Psoas muscle (tissue), 8 donors: ENCODE measurements at regions of chr12 and their contacts with region 1.

Region 1: DNA sequence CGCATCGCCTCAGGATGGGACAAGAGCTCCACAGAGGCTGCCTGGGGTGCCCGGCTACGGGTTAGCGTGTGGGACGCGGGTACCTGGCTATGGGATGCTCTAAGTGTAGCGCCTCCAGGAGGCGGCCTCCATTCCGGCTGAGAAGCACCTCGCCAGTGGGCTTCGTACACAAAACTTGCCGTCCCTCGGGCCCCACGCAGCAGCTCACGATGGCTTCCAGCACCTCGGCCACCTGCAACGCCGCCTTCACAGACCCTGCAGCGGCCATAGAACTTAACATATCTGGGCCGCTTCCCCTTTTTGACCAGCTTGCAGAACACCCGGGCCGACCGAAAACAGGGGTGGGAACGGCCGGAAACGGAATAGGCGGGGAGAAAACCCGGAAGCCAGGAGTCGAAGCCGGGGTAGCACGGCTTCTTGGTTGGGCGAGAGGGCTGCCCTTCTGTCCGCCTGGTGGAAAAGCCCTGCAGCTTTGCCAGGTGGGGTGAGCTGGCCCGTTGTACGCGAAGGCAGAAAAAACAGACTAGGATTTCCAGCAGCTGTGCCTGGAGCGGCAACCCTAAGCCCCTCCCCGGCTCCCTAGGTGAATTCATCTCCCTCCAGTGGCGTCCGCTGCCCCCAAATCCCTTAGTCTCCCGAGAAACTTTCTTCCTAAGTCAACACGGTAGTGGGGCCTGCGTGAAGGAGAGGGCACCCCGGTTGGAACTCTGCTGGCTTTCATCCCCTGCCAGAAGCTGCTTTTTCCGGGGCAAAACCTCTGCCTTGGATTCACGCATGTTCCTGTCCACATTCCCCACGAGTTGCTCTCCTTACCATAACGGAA is at the start of gene BBS10:
- DNase-seq: peak; percentile 92 to 95
- ATAC-seq: peak; percentile 95 to 97 (median 96)
- H3K4me3 ChIP-seq: peak within 1 kb of the TSS; percentile 90
- H3K27ac ChIP-seq: peak within 1 kb of the TSS; percentile 86
- H3K4me1 ChIP-seq: peaks cover 21% of the 10 kb centered on the region
- H3K27me3 ChIP-seq: no peaks in the 10 kb centered on the region
- CTCF ChIP-seq: peak; percentile 36
- total RNA-seq, gene BBS10: 3.9 to 8.2 (median 6.7) TPM

Region 2: DNA sequence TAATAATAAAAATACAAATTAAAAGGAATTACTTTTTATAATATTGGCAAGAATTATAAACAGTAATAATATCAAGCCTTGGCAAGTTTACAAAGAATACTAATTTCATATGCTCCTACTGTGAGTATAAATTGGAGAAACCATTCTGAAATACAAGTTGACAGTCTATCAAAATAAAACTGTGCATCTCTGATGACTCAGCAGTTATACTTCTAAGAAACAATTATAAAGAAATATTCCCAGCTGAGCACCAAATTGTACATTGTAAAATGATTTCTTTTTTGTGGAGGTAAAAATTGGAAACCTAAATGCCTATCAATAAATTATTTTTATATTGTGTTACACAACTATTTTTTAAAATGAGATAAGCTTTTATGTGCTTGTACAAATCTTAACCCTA is 1103.2 kb before region 1 on chr12:
- intact Hi-C with region 1: no loop called
- DNase-seq: no peak
- ATAC-seq: no peak
- H3K4me3 ChIP-seq: no peak overlapping the region
- H3K27ac ChIP-seq: no peak overlapping the region
- H3K4me1 ChIP-seq: no peaks in the 10 kb centered on the region
- H3K27me3 ChIP-seq: no peaks in the 10 kb centered on the region
- CTCF ChIP-seq: no peak

Region 3: DNA sequence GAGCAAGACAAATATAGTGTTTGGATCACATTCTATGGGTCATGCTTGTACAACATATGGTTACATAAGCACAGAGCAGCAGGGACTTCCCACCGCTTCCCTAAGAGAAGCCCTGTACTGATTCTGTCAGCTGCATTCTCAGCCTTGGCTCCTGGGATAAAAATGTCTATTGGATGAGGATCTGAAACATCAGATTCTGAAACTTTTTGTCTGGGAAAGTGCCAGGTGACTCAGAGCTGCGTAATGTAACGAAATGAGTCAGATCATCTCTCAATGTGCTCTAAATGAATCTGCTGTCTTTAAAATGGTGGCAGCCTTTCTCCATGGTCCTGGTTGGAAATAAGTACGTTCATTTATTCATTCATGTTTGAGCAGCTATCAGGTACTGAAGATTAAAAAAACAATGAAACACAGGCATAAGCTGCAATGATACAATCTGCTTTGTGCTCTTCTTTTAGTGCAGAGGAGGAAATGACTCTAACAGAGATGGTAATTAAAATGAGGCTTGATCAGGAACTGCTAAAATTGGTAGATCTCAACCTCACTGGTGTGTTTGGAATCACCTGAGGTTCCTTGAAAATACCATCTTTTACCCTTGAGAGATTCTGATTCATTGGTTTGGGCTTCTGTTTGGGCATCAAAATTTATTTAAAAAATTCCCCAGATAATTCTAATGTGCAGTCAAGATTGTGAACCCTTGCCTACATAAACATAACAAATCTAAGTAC is 164.7 kb before region 1 on chr12:
- intact Hi-C with region 1: loop called in 1 of 2 experiments (anchors 2 kb)
- DNase-seq: peak in 1 of 2 donors; percentile 21
- ATAC-seq: peak in 1 of 4 donors; percentile 27
- H3K4me3 ChIP-seq: no peak overlapping the region
- H3K27ac ChIP-seq: no peak overlapping the region
- H3K4me1 ChIP-seq: no peaks in the 10 kb centered on the region
- H3K27me3 ChIP-seq: no peaks in the 10 kb centered on the region
- CTCF ChIP-seq: no peak

Region 4: GRCh38 chr12:76266797-76267196 is 81.5 kb before region 1 on chr12:
- intact Hi-C with region 1: loop called (anchors 5 kb)
- DNase-seq: peak; percentile 64 to 77
- ATAC-seq: peak; percentile 96 to 99 (median 98)
- H3K4me3 ChIP-seq: no peak overlapping the region
- H3K27ac ChIP-seq: peak overlapping the region; percentile 43
- H3K4me1 ChIP-seq: peaks cover 11% of the 10 kb centered on the region
- H3K27me3 ChIP-seq: no peaks in the 10 kb centered on the region
- CTCF ChIP-seq: no peak

Region 5: DNA sequence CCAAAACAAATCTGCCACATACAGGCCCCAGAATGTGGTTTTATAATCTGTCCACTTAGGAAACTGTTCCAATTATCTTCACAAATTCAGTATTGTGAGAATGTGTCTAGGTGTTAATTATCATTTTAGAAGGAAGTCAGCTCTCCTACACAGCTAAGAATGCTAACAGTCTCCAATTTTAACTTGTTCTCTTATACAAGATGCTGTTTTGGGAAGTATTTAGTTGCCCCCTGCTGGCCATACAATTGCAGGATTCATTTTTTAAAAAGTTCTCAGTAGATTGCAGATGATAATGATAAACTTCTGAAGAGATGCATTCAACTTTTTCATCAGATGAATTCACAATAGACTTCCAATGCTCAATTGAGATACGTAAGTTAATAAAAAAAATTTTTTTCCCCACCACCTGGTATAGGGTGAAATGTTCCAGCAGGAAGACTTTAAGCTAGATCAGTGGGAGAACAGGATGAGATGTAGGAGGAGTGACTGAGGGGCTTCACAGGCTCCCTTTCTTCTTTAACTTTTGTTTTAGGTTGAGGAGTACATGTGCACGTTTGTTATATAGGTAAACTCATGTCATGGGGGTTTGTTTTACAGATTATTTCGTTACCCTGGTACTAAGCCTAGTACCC is 238.6 kb after region 1 on chr12:
- intact Hi-C with region 1: loop called in 1 of 2 experiments (anchors 5 kb)
- DNase-seq: no peak
- ATAC-seq: no peak
- H3K4me3 ChIP-seq: no peak overlapping the region
- H3K27ac ChIP-seq: peak overlapping the region; percentile 91
- H3K4me1 ChIP-seq: peaks cover 29% of the 10 kb centered on the region
- H3K27me3 ChIP-seq: no peaks in the 10 kb centered on the region
- CTCF ChIP-seq: peak; percentile 69